Sigmoid colon (tissue), 7 donors: ENCODE measurements at regions of chr10 and their contacts with region 1.

Region 1: GRCh38 chr10:113187063-113187777 is 237.2 kb downstream of the TCF7L2 start:
- DNase-seq: peak; percentile 92
- H3K4me3 ChIP-seq: no peak overlapping the region
- H3K27ac ChIP-seq: peak overlapping the region in 3 of 4 donors; percentile 41 to 77 (median 63)
- H3K4me1 ChIP-seq: peaks cover 0 to 40% (median 20%) of the 10 kb centered on the region in 4 donors
- H3K27me3 ChIP-seq: no peaks in the 10 kb centered on the region
- CTCF ChIP-seq: no peak
- EP300 ChIP-seq: no peak
- POLR2A ChIP-seq: no peak

Region 2: GRCh38 chr10:112967200-112967599 is 220.0 kb before region 1 on chr10:
- intact Hi-C with region 1: no loop called
- DNase-seq: no peak
- H3K4me3 ChIP-seq: no peak overlapping the region
- H3K27ac ChIP-seq: peak overlapping the region in 1 of 4 donors; percentile 20
- H3K4me1 ChIP-seq: peaks cover 0 to 49% (median 43%) of the 10 kb centered on the region in 4 donors
- H3K27me3 ChIP-seq: no peaks in the 10 kb centered on the region
- CTCF ChIP-seq: no peak
- EP300 ChIP-seq: no peak
- POLR2A ChIP-seq: no peak

Region 3: GRCh38 chr10:113139699-113140098 is 47.5 kb before region 1 on chr10:
- intact Hi-C with region 1: no loop called
- DNase-seq: no peak
- H3K4me3 ChIP-seq: no peak overlapping the region
- H3K27ac ChIP-seq: peak overlapping the region in 3 of 4 donors; percentile 65 to 80 (median 74)
- H3K4me1 ChIP-seq: peaks cover 3 to 53% (median 38%) of the 10 kb centered on the region in 4 donors
- H3K27me3 ChIP-seq: no peaks in the 10 kb centered on the region
- CTCF ChIP-seq: no peak
- EP300 ChIP-seq: no peak
- POLR2A ChIP-seq: no peak

Region 4: DNA sequence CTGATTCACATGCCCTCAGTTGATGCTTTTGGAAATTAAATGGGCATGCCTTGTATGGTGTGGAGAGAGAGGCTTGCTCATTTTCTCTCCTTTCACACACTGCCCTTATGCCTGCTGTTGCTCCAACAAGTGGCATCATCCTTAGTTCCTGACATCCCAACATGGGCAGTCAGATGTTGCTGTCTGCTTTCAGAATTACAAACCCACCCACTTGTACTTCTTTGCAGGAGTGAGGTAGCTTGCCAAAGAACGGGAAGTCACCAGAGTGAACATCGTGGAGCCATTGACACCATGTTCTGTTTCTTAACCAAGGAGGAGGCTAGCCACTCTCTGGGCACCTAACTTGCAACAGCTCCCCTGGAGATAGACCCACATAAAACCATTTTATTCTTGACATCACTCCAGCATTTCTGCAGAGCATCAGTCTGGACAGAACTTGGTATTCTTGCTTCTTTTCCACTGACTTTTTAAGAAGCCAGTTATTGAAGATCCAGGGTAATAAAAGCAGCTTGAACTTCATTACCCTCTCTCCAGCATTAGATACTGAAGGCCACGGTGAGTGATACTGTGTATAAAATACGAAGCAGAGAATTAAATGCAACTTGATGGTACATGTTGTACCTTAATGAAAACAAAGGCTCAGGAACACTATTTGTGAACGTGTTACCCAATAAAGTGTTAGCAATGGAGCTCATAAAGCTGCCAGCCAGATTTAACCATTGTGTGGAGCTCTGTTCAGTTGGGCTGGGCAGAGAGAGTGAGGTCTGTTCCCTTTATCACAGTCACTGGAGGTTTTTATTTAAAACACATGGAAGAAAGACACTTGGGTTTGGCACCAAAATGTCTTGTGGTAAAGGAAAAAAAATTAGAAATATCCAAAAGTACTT is 169.8 kb after region 1 on chr10:
- intact Hi-C with region 1: loop called (anchors 2 kb)
- DNase-seq: peak; percentile 90
- H3K4me3 ChIP-seq: no peak overlapping the region
- H3K27ac ChIP-seq: peak overlapping the region in 3 of 4 donors; percentile 46 to 75 (median 71)
- H3K4me1 ChIP-seq: peaks cover 3 to 30% (median 26%) of the 10 kb centered on the region in 4 donors
- H3K27me3 ChIP-seq: no peaks in the 10 kb centered on the region
- CTCF ChIP-seq: no peak
- EP300 ChIP-seq: peak in 3 of 4 donors; percentile 66 to 95 (median 89)
- POLR2A ChIP-seq: no peak